Activated B cell treated with CpG ODN at 0.5 μM for 24 hours (primary cell): ENCODE measurements at regions of chr4 and their contacts with region 1.

Region 1: GRCh38 chr4:121800961-121801714 is at the start of gene EXOSC9:
- DNase-seq: peak; percentile 94
- ATAC-seq: peak; percentile 81
- H3K4me3 Mint-ChIP-seq: peak within 1 kb of the TSS; percentile 96
- H3K27ac Mint-ChIP-seq: peak within 1 kb of the TSS; percentile 100
- H3K4me1 Mint-ChIP-seq: peaks cover 31% of the 10 kb centered on the region
- H3K27me3 Mint-ChIP-seq: no peaks in the 10 kb centered on the region
- CTCF ChIP-seq: no peak
- total RNA-seq, gene EXOSC9: 37.5 and 39.1 TPM in 2 replicates

Region 2: GRCh38 chr4:119841361-119841760 is 1959.8 kb before region 1 on chr4:
- CTCF ChIA-PET with region 1: no interaction called
- POLR2A ChIA-PET with region 1: no interaction called
- intact Hi-C with region 1: no loop called
- DNase-seq: no peak
- ATAC-seq: no peak
- H3K4me3 Mint-ChIP-seq: no peak overlapping the region
- H3K27ac Mint-ChIP-seq: no peak overlapping the region
- H3K4me1 Mint-ChIP-seq: no peaks in the 10 kb centered on the region
- H3K27me3 Mint-ChIP-seq: no peaks in the 10 kb centered on the region
- CTCF ChIP-seq: no peak

Region 3: GRCh38 chr4:121656269-121656641 is 144.9 kb before region 1 on chr4:
- CTCF ChIA-PET with region 1: no interaction called
- POLR2A ChIA-PET with region 1: no interaction called
- intact Hi-C with region 1: no loop called
- DNase-seq: no peak
- ATAC-seq: no peak
- H3K4me3 Mint-ChIP-seq: no peak overlapping the region
- H3K27ac Mint-ChIP-seq: no peak overlapping the region
- H3K4me1 Mint-ChIP-seq: peaks cover 10% of the 10 kb centered on the region
- H3K27me3 Mint-ChIP-seq: no peaks in the 10 kb centered on the region
- CTCF ChIP-seq: no peak

Region 4: GRCh38 chr4:121823505-121824170 is 22.5 kb after region 1 on chr4 and contains the start of gene CCNA2:
- CTCF ChIA-PET with region 1: no interaction called
- POLR2A ChIA-PET with region 1: interaction called, 22 read pairs
- intact Hi-C with region 1: loop called (anchors 1 kb)
- DNase-seq: peak; percentile 86
- ATAC-seq: peak; percentile 99
- H3K4me3 Mint-ChIP-seq: peak within 1 kb of the TSS; percentile 87
- H3K27ac Mint-ChIP-seq: peak within 1 kb of the TSS; percentile 82
- H3K4me1 Mint-ChIP-seq: peaks cover 17% of the 10 kb centered on the region
- H3K27me3 Mint-ChIP-seq: no peaks in the 10 kb centered on the region
- CTCF ChIP-seq: no peak
- total RNA-seq, gene CCNA2: 1.4 and 2.0 TPM in 2 replicates

Region 5: GRCh38 chr4:122151982-122152710 is 351.0 kb after region 1 on chr4 and contains the start of gene BLTP1:
- CTCF ChIA-PET with region 1: no interaction called
- POLR2A ChIA-PET with region 1: no interaction called
- intact Hi-C with region 1: loop called (anchors 2 kb)
- DNase-seq: peak; percentile 85
- ATAC-seq: peak; percentile 95
- H3K4me3 Mint-ChIP-seq: peak within 1 kb of the TSS; percentile 97
- H3K27ac Mint-ChIP-seq: peak within 1 kb of the TSS; percentile 97
- H3K4me1 Mint-ChIP-seq: peaks cover 39% of the 10 kb centered on the region
- H3K27me3 Mint-ChIP-seq: no peaks in the 10 kb centered on the region
- CTCF ChIP-seq: no peak
- total RNA-seq, gene BLTP1: 39.1 and 44.4 TPM in 2 replicates